ENCODE measurements at regions of chr11 and their contacts with region 1.

Region 1: DNA sequence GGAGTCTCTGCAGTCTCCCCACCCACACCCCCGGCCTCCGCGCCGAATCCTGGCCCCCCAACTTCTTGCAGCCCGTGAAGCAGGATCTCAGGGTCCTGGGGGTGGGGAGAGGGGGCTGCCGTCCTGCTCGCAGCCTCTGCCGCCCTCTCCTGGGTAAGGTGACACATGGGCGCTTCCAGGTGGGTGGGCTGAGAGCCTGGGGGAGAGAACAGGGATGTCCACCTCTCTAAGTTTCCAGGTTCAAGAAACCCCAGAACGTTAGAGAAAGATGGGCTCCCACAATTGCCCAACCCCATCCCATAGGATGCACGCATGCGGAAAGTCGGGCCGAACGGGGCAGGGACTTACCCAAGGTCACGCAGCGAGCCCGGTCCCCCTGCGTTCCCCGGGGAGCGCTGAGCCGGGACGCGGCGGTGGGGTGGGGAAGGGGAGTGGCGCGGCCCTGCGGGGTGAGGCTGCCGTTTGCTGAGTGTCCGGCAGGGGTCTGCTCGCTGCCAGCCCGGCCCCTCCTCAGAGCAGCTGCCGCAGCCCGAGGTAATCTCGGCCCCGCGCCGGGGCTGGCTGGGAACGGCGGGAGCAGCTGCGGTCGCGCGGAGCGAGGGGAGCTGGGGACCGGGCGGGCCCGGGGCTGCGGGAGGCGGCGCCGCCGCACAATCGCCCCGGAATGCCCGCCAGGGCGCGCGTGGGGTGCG is 705 bp upstream of the CAPN1 start:
- DNase-seq: peak; percentile 74
- H3K4me3 Mint-ChIP-seq: peak overlapping the region; percentile 87
- H3K27ac Mint-ChIP-seq: no peak overlapping the region
- H3K4me1 Mint-ChIP-seq: peaks cover 20% of the 10 kb centered on the region
- H3K27me3 Mint-ChIP-seq: no peaks in the 10 kb centered on the region

Region 2: DNA sequence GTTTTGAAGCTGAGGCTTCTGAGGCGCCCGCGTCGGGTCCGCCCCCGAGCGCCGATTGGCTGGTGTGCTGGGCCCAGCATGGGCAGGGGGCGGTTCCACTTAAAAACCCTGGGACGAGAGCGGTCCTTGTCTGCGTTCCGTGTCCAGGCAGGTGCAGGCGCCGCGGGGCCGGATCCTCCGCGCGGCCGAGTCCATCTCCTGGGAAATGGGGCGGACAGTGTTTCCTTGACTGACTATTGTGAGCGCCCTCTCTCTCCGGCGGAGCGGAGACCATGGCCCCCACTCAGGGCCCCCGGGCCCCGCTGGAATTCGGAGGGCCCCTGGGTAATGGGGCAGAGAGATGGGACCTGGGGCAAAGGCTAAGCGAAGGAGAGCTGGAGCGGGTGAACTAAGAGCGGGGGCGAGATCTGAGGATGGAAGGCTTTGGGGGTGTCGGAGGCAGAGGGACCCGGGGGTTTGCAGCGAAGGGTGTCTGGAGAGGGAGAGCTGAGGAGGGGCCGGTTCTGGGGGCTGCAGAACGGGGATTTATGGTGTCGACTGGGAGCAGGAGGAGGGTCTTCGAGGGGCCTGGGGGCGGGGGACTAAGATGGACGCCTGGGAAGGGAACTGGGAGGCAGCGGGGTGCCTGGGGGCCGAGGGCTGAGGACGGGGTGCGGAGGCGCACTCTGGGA is 69.1 kb before region 1 on chr11 and contains the start of gene TM7SF2:
- CTCF ChIA-PET with region 1: interaction called, 9 read pairs
- POLR2A ChIA-PET with region 1: interaction called, 4 read pairs
- intact Hi-C with region 1: loop called (anchors 2 kb)
- DNase-seq: peak; percentile 96
- H3K4me3 Mint-ChIP-seq: peak within 1 kb of the TSS; percentile 84
- H3K27ac Mint-ChIP-seq: peak within 1 kb of the TSS; percentile 80
- H3K4me1 Mint-ChIP-seq: peaks cover 56% of the 10 kb centered on the region
- H3K27me3 Mint-ChIP-seq: no peaks in the 10 kb centered on the region
- total RNA-seq, gene TM7SF2: 19.2 to 21.0 TPM

Region 3: DNA sequence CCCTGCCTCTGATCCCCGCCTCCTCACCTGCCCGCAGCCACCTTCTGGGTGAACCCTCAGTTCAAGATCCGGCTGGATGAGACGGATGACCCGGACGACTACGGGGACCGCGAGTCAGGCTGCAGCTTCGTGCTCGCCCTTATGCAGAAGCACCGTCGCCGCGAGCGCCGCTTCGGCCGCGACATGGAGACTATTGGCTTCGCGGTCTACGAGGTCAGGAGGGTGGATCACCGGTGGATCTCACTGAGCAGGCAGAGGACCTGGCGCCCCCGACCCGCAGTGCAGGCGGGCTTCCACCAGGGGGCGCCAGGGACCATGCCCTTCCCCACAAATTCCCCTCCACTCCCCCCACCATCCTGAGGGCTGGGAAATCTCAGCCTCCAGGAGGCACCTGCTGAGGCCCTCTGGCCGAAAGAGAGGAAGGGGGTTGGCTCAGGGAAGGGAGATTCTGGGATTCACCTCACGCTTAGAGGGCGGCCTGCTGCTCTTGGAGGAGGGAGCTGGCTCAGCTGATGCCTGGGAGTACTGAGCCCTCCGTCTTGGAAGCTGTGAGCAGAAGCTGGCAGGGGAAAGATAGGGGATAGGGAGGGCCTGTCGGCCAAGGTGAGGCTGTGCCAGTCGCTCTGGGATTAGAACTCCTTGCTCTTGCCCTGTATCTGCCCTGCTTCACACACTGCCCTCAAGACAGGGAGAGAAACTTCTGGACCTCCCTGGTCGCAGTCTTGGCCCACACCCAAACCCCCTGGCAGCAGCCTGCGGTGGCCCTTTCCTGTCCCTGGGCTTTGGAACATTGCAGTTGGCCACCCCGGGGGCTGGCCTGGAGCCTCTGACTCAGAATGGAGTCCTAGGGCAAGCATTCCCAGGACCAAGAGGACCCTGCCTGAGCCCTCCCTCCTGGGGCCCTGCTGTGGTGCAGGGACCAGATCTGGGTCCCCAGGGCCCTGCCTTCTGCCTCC is 23.9 kb after region 1 on chr11:
- CTCF ChIA-PET with region 1: interaction called, 12 read pairs
- POLR2A ChIA-PET with region 1: no interaction called
- intact Hi-C with region 1: no loop called
- DNase-seq: peak; percentile 58
- H3K4me3 Mint-ChIP-seq: no peak overlapping the region
- H3K27ac Mint-ChIP-seq: no peak overlapping the region
- H3K4me1 Mint-ChIP-seq: peaks cover 3% of the 10 kb centered on the region
- H3K27me3 Mint-ChIP-seq: no peaks in the 10 kb centered on the region

Measured in activated CD4-positive, alpha-beta memory T cell treated with anti-CD3 and anti-CD28 coated beads for 36 hours (primary cell).